Activated CD8-positive, alpha-beta T cell treated with anti-CD3 and anti-CD28 coated beads, Interleukin-2, amount 10 ng/mL, durations not matched to agents 7 days and 5 days (primary cell): ENCODE measurements at regions of chr1 and their contacts with region 1.

Region 1: DNA sequence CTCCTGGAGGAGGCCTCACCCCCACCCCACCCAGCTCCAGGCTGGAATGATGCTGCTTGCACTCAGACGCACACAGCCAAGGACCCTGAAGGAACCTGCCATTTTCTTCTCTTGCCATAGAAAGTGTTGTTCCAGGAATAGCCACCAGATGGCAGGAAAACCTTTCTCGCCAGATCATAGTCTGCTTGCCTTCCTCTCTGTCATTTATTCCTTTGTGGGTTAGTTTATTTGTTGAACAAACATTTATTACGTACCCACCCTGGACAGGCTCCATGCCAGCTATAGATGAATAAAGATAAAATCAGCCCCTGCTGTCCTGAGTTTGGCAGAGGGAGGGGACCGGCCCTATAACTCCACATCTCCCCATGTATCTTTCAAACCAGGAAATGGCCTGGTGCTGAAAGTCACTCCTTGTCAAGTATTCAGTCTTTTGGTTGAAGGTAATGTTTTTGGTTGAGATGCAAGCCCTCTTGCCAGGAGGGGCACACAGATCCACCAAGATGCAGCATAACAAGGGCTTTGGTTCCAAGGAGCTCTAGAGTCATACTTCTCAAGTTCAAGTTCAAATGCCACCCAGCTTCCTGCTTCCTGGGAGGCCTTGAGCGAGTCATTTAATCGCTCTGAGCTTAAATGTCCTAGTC is 7.0 kb upstream of the KCNC4 start:
- DNase-seq: peak; percentile 85
- ATAC-seq: peak; percentile 66
- H3K4me3 Mint-ChIP-seq: no peak overlapping the region
- H3K27ac Mint-ChIP-seq: peak overlapping the region; percentile 90
- H3K4me1 Mint-ChIP-seq: peaks cover 24% of the 10 kb centered on the region
- H3K27me3 Mint-ChIP-seq: no peaks in the 10 kb centered on the region

Region 2: DNA sequence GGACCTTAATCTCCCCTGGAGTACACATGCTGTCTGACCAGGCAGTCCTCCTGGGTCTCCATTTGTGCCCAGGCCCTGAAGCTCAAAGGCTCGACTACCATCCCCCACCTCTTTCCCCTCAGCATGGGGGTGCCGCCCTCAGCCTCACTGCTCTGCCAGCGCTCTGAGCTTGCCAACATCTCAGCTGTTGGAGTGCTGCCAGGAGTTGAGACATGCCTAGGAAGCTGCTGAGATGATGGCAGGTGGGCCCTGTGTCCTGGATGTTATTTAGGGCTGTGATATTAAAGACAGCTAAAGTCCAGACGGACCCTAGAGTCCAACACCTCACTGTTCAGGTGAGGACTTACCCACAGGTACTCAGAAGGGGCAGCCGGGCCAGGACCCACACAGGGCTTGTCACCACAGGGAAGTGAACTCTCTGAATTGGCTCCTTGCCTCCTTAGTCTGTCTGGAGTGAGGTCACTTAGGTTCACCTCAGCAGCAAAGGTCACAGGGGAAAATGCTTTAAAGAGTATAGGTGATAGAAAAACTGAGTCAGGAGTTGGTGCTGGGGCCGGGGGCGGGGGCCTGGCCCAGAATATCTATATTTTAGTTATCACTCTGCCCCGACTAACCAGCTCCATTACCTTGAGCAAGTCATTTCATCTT is 12.7 kb before region 1 on chr1:
- CTCF ChIA-PET with region 1: interaction called, 16 read pairs
- POLR2A ChIA-PET with region 1: no interaction called
- DNase-seq: no peak
- ATAC-seq: no peak
- H3K4me3 Mint-ChIP-seq: no peak overlapping the region
- H3K27ac Mint-ChIP-seq: no peak overlapping the region
- H3K4me1 Mint-ChIP-seq: no peaks in the 10 kb centered on the region
- H3K27me3 Mint-ChIP-seq: peaks cover 9% of the 10 kb centered on the region

Region 3: DNA sequence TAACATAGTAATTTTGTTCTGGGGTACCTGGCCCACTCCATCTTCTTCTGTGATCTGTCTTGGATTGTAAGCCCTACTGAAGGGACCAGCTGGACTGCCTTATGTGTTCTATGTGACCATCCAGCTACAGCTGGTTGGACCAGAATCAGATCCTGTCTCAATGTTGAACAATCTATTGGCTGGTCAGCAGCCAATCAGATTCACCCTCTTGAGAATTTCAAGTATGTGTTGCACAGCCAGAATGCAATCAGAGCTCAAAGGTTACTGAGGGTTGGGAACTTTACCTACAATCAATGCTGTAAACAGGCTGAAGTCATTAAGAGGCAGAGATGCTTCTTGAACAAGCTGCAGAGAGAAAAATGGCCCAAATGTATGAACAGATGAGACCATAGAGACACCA is 68.9 kb after region 1 on chr1:
- CTCF ChIA-PET with region 1: interaction called, 11 read pairs
- POLR2A ChIA-PET with region 1: no interaction called
- DNase-seq: no peak
- ATAC-seq: no peak
- H3K4me3 Mint-ChIP-seq: no peak overlapping the region
- H3K27ac Mint-ChIP-seq: no peak overlapping the region
- H3K4me1 Mint-ChIP-seq: no peaks in the 10 kb centered on the region
- H3K27me3 Mint-ChIP-seq: peaks cover 12% of the 10 kb centered on the region

Region 4: DNA sequence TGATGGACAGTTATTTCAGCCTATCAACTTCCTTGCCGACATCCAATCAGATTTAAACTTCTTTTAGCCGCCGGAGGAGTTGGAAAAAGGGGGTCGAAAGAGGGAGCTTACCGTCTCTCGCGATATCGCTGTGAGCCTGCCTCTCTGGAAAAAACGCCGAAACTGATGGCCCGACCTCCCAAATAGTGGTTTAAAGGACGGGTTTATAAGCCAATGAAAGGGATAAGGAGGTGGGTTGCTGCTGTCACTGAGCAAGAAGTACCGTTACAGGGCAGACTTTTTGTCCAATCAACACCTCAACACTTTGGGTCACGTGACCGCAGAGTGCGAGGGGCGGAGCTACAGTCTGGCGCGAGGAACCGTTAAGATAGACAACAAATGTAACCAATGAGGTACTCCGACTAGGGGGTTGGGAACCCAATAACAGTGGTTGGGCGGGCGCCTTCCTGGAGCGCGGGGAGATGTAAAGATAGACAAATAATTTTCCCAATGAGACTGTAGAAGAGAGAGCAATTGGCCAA is 135.8 kb after region 1 on chr1 and contains the start of gene RBM15:
- CTCF ChIA-PET with region 1: interaction called, 87 read pairs
- POLR2A ChIA-PET with region 1: interaction called, 69 read pairs
- DNase-seq: peak; percentile 99
- ATAC-seq: peak; percentile 82
- H3K4me3 Mint-ChIP-seq: no peak within 1 kb of the TSS
- H3K27ac Mint-ChIP-seq: no peak within 1 kb of the TSS
- H3K4me1 Mint-ChIP-seq: peaks cover 52% of the 10 kb centered on the region
- H3K27me3 Mint-ChIP-seq: no peaks in the 10 kb centered on the region
- total RNA-seq, gene RBM15: 72.0 to 75.5 TPM

Region 5: GRCh38 chr1:110347182-110347893 is 144.2 kb after region 1 on chr1:
- CTCF ChIA-PET with region 1: interaction called, 31 read pairs
- POLR2A ChIA-PET with region 1: interaction called, 3 read pairs
- DNase-seq: no peak
- ATAC-seq: no peak
- H3K4me3 Mint-ChIP-seq: peak overlapping the region; percentile 29
- H3K27ac Mint-ChIP-seq: no peak overlapping the region
- H3K4me1 Mint-ChIP-seq: peaks cover 84% of the 10 kb centered on the region
- H3K27me3 Mint-ChIP-seq: no peaks in the 10 kb centered on the region

Region 6: DNA sequence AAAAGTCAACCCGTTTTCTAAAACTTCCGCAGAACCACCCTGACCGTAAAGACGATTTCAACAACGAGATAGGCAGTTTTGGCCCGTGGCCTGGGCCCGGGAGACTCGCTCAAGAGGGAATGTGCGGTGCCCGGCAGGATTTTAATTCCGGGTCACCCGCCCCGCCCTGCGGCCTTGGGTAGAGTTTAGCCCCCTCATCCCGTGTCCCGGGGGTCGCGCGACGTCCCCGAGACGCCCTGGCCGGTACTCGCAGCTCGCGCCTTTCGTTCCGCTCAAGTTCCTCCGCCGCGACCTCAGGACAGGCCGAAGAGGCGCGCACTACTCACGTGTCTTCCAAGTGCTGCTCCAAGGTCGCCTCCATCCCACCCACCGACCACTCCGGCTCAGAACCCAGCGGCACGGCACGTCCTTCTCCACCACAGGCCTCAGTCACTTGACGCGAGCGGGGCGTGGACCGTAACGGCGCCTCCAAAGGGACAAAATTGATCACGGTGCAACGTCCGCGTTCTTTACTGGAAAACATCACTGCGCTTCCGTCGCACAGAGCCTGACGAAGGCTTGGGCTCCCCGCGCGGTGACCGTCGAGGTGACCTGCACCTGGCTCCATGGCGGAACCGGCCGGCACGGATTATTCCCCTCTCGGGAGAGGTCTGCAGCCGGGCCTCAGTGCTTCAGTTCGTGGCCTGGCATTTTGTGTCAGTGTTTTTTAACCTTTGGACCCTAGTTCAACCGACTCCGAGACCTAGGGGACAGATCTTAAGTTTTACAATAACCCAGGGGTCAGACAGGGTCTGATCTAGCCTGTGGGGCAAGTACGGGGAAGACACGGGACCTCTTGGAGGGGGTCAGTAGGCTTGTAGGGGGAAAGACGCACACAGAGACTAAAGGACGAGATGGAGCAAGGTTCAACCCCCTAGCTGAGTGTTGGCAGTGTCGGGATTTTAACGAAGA is 204.4 kb after region 1 on chr1 and contains the start of gene LAMTOR5:
- CTCF ChIA-PET with region 1: interaction called, 25 read pairs
- POLR2A ChIA-PET with region 1: interaction called, 3 read pairs
- DNase-seq: peak; percentile 96
- ATAC-seq: peak; percentile 93
- H3K4me3 Mint-ChIP-seq: peak within 1 kb of the TSS; percentile 100
- H3K27ac Mint-ChIP-seq: peak within 1 kb of the TSS; percentile 100
- H3K4me1 Mint-ChIP-seq: peaks cover 28% of the 10 kb centered on the region
- H3K27me3 Mint-ChIP-seq: no peaks in the 10 kb centered on the region
- total RNA-seq, gene LAMTOR5: 123 TPM

Region 7: GRCh38 chr1:110412576-110412975 is 209.4 kb after region 1 on chr1:
- CTCF ChIA-PET with region 1: interaction called, 25 read pairs
- POLR2A ChIA-PET with region 1: interaction called, 3 read pairs
- DNase-seq: peak; percentile 70
- ATAC-seq: peak; percentile 55
- H3K4me3 Mint-ChIP-seq: no peak overlapping the region
- H3K27ac Mint-ChIP-seq: no peak overlapping the region
- H3K4me1 Mint-ChIP-seq: peaks cover 16% of the 10 kb centered on the region
- H3K27me3 Mint-ChIP-seq: no peaks in the 10 kb centered on the region